ENCODE measurements at regions of chr22 and their contacts with region 1.

Region 1: GRCh38 chr22:28894334-28894733 is 11.0 kb downstream of the ZNRF3 start:
- DNase-seq: no peak
- ATAC-seq: no peak
- H3K4me3 ChIP-seq: no peak overlapping the region
- H3K27ac ChIP-seq: no peak overlapping the region
- H3K4me1 ChIP-seq: peaks cover 99% of the 10 kb centered on the region
- H3K27me3 ChIP-seq: no peaks in the 10 kb centered on the region
- CTCF ChIP-seq: no peak
- EP300 ChIP-seq: no peak
- POLR2A ChIP-seq: no peak
- RAD21 ChIP-seq: no peak

Region 2: DNA sequence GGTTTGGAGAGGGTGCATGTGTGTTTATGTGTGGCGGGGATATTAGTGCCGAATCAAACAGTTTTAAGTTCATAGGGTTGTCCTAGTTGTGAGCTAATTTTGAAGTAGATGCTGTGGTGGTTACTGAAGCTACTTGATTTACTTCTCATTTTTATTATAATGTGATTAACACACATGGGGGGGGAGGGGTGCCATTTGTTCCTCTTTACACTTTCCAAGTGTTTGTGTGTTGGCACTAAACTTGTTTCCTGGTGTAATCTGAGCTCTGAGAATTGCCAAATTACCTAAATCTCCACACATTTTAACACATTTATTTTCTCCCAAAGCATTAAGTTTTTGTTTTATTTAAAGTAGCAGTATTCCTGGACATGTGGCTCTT is 49.2 kb after region 1 on chr22:
- CTCF ChIA-PET with region 1: no interaction called
- POLR2A ChIA-PET with region 1: no interaction called
- in situ Hi-C with region 1: no loop called
- intact Hi-C with region 1: loop called (anchors 5 kb)
- DNase-seq: no peak
- ATAC-seq: no peak
- H3K4me3 ChIP-seq: no peak overlapping the region
- H3K27ac ChIP-seq: peak overlapping the region; percentile 48
- H3K4me1 ChIP-seq: peaks cover 78% of the 10 kb centered on the region
- H3K27me3 ChIP-seq: no peaks in the 10 kb centered on the region
- CTCF ChIP-seq: no peak
- EP300 ChIP-seq: no peak
- POLR2A ChIP-seq: no peak
- RAD21 ChIP-seq: no peak

Region 3: GRCh38 chr22:29062286-29062821 is 168.0 kb after region 1 on chr22:
- CTCF ChIA-PET with region 1: no interaction called
- POLR2A ChIA-PET with region 1: no interaction called
- in situ Hi-C with region 1: no loop called
- intact Hi-C with region 1: no loop called
- DNase-seq: peak; percentile 73
- ATAC-seq: peak; percentile 54
- H3K4me3 ChIP-seq: peak overlapping the region in 2 of 3 experiments; percentile 24 to 26; a peak in 2 of 6 replicates
- H3K27ac ChIP-seq: no peak overlapping the region
- H3K4me1 ChIP-seq: peaks cover 51% of the 10 kb centered on the region
- H3K27me3 ChIP-seq: 0 out of 5 replicates have a peak, but pooled peaks cover 0 to 1% of the 10 kb centered on the region in 2 experiments
- CTCF ChIP-seq: no peak
- EP300 ChIP-seq: no peak
- POLR2A ChIP-seq: no peak
- RAD21 ChIP-seq: no peak

Measured in HepG2 (cell line).